ENCODE measurements at regions of chr3 and their contacts with region 1.

Region 1: GRCh38 chr3:32026593-32026992 is 45.0 kb downstream of the ZNF860 start:
- DNase-seq: no peak
- H3K4me3 ChIP-seq: no peak overlapping the region
- H3K27ac ChIP-seq: no peak overlapping the region
- H3K4me1 ChIP-seq: no peaks in the 10 kb centered on the region
- H3K27me3 ChIP-seq: no peaks in the 10 kb centered on the region
- CTCF ChIP-seq: no peak
- POLR2A ChIP-seq: no peak

Region 2: DNA sequence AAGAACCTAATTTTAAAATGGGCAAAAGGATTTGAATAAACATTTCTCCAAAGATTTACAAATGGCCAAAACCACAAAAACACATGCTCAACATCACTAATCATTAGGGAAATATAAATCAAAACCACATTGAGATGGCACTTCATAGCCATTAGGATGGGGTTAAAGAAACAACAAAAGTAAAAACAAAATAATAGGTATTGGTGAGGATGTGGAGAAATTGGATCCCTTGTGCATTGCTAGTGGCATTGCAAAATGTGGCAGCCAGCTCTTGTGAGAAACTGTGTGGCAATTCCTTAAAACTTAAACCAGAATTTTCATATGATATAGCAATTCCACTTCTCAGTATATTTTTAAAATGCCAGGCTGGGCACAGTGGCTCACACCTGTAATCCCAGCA is 367.3 kb before region 1 on chr3:
- intact Hi-C with region 1: loop called (anchors 5 kb)
- DNase-seq: no peak
- H3K4me3 ChIP-seq: no peak overlapping the region
- H3K27ac ChIP-seq: no peak overlapping the region
- H3K4me1 ChIP-seq: no peaks in the 10 kb centered on the region
- H3K27me3 ChIP-seq: no peaks in the 10 kb centered on the region
- CTCF ChIP-seq: no peak
- POLR2A ChIP-seq: no peak

Region 3: DNA sequence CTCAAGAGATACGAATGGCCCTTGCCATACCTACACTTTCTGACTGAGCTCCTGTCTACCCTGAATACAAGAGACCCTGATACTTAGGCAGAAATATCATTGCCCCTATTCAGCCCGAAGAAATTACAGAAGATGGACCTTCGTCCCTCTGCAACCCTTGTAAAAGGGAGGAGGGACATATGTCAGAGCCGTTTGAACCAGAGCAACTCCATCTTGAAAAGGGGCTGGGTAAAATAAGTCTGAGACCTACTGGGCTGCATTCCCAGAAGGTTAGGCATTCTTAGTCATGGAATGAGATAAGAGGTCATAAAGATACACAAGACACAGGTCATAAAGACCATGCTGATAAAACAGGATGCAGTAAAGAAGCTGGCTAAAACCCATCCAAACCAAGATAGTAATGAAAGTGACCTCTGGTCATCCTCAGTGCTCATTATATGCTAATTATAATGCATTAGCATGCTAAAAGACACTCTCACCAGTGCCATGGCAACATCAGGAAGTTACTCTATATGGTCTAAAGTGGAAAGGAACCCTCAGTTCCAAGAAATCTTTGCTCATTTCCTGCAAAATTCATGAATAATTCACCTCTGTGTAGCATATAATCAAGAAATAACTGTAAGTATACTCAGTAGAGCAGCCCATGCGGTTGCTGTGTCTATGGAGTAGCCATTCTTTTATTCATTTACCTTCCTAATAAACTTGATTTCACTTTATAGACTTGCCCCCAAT is 30.1 kb after region 1 on chr3:
- intact Hi-C with region 1: no loop called
- DNase-seq: no peak
- H3K4me3 ChIP-seq: no peak overlapping the region
- H3K27ac ChIP-seq: no peak overlapping the region
- H3K4me1 ChIP-seq: no peaks in the 10 kb centered on the region
- H3K27me3 ChIP-seq: no peaks in the 10 kb centered on the region
- CTCF ChIP-seq: no peak
- POLR2A ChIP-seq: no peak

Region 4: GRCh38 chr3:32138545-32139104 is 112.0 kb after region 1 on chr3:
- intact Hi-C with region 1: loop called (anchors 10 kb)
- DNase-seq: no peak
- H3K4me3 ChIP-seq: no peak overlapping the region
- H3K27ac ChIP-seq: no peak overlapping the region
- H3K4me1 ChIP-seq: no peaks in the 10 kb centered on the region
- H3K27me3 ChIP-seq: no peaks in the 10 kb centered on the region
- CTCF ChIP-seq: no peak
- POLR2A ChIP-seq: no peak

Measured in breast epithelium (tissue), 4 donors.